ENCODE measurements at regions of chr13 and their contacts with region 1.

Region 1: GRCh38 chr13:108086678-108087077 is 128.7 kb downstream of the LIG4 start:
- DNase-seq: no peak
- H3K4me3 ChIP-seq: no peak overlapping the region
- H3K27ac ChIP-seq: no peak overlapping the region
- H3K4me1 ChIP-seq: no peaks in the 10 kb centered on the region
- H3K27me3 ChIP-seq: no peaks in the 10 kb centered on the region
- CTCF ChIP-seq: no peak
- EP300 ChIP-seq: no peak
- POLR2A ChIP-seq: no peak

Region 2: DNA sequence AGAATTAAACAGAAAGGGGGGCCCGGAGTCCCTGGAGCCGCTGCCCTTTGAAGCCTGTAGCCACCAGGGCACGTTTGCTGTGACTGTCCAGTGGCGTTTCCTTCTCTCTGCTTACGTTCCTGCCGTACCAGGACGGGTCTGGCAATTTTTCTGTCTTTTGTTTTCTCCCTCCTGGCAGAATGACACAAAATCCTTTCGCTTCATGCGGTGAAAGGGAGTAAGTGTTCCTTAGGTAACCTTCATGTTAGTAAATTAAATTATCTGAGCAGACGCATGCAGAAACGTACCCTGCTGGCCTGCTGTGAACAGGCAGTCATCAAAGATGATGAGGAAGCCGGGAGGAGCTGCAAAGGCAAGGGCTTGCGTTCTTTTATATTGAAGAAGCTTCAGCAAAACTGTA is 1219.4 kb before region 1 on chr13:
- in situ Hi-C with region 1: no loop called
- intact Hi-C with region 1: loop called (anchors 10 kb)
- DNase-seq: no peak
- H3K4me3 ChIP-seq: peak overlapping the region in 2 of 4 donors; percentile 4 to 18
- H3K27ac ChIP-seq: no peak overlapping the region
- H3K4me1 ChIP-seq: no peaks in the 10 kb centered on the region
- H3K27me3 ChIP-seq: no peaks in the 10 kb centered on the region
- CTCF ChIP-seq: no peak
- EP300 ChIP-seq: no peak
- POLR2A ChIP-seq: no peak